ENCODE measurements at regions of chr15 and their contacts with region 1.

Region 1: DNA sequence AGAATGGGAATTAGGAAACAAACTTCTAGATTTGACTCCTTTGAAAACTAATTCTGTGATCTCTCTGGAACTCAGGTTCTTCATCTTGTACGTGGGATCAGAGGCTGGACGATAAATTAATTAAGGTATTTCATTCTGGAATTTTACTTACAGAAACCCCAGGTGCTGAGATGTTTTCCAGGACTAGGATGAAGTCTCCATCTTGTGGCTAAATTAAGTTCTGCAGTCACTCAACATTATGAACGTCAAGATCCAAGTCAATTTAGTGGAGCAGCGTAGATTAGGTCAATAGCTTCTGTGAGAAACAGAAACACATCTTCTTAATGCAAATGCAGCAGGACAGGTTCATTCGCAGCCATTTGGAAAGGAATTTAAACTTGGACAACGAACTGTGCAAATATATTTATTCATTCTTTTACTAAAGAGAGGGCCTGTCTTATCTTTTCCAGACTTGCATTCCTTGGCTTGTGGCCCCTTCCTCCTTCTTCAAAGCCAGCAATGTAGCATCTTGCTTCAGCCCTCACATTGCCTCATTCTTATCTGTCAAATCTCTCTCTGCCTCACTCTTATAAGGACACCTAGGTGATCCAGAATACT is 26.7 kb upstream of the TMC3 start:
- DNase-seq: peak; percentile 52
- H3K4me3 ChIP-seq: peak overlapping the region in 1 of 2 experiments; percentile 2; a peak in 1 of 4 replicates
- H3K27ac ChIP-seq: no peak overlapping the region
- H3K4me1 ChIP-seq: no peaks in the 10 kb centered on the region
- H3K27me3 ChIP-seq: no peaks in the 10 kb centered on the region
- CTCF ChIP-seq: peak; percentile 83
- EP300 ChIP-seq: no peak
- RAD21 ChIP-seq: peak; percentile 91

Region 2: DNA sequence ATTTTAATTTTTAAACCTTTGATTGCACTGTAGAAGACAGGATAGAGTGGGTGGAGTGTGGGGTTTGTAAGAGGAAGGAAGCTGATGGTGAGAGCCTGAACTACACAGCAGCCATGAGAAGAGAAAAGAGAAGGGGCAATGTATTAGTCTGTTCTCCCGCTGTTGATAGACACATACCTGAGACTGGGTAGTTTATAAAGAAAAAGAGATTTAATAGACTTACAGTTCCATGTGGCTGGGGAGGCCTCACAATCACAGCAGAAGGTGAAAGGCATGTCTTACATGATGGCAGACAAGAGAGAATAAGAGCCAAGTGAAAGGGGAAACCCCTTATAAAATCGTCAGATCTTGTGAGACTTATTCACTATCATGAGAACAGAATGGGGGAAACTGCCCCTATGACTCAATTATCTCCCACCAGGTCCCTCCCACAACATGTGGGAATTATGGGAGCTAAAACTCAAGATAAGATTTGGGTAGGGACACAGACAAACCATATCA is 114.1 kb before region 1 on chr15:
- CTCF ChIA-PET with region 1: interaction called, 10 read pairs
- POLR2A ChIA-PET with region 1: no interaction called
- DNase-seq: no peak
- H3K4me3 ChIP-seq: no peak overlapping the region
- H3K27ac ChIP-seq: no peak overlapping the region
- H3K4me1 ChIP-seq: no peaks in the 10 kb centered on the region
- H3K27me3 ChIP-seq: peaks cover 20% of the 10 kb centered on the region
- CTCF ChIP-seq: no peak
- EP300 ChIP-seq: no peak
- RAD21 ChIP-seq: no peak

Region 3: GRCh38 chr15:81293728-81294515 is 106.8 kb before region 1 on chr15:
- CTCF ChIA-PET with region 1: interaction called, 10 read pairs
- POLR2A ChIA-PET with region 1: no interaction called
- DNase-seq: peak; percentile 50
- H3K4me3 ChIP-seq: no peak overlapping the region
- H3K27ac ChIP-seq: no peak overlapping the region
- H3K4me1 ChIP-seq: peaks cover 7 to 9% of the 10 kb centered on the region in 2 experiments; a peak in 2 of 4 replicates
- H3K27me3 ChIP-seq: peaks cover 10% of the 10 kb centered on the region
- CTCF ChIP-seq: no peak
- EP300 ChIP-seq: no peak
- RAD21 ChIP-seq: no peak

Region 4: DNA sequence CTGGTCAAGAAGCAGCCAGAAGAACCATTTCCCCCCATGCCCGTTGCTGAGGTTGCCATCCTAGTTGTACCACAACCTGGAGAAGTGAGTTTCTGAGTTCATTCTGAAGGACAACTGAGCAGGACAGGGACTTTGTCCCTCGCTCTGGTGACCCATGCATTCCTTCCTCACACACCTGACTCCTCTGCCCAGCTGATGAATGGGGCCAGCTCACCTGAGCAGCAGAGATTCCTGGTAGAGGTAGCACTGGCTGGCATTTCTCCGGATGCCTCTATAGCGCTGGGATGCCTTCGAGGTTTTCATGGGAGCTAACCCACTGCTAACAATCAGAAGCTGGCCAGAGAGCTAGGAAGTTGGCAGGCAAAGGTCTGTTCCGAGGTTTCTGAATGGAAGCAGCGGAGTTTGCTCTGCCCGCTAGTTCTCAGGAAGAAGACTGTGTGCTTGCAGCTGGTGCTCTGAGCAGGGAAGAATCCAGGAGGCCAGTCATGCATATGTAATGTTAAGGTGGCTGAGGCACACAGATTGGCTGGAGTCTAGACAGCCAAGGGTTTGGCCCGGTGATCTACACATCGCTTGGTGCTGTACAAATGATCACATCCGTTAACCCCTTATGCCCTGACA is 26.9 kb before region 1 on chr15 and contains the start of gene TMC3:
- CTCF ChIA-PET with region 1: interaction called, 10 read pairs
- POLR2A ChIA-PET with region 1: no interaction called
- DNase-seq: no peak
- H3K4me3 ChIP-seq: no peak within 1 kb of the TSS
- H3K27ac ChIP-seq: no peak within 1 kb of the TSS
- H3K4me1 ChIP-seq: peaks cover 0 to 2% of the 10 kb centered on the region in 2 experiments; a peak in 1 of 4 replicates
- H3K27me3 ChIP-seq: no peaks in the 10 kb centered on the region
- CTCF ChIP-seq: no peak
- EP300 ChIP-seq: no peak
- RAD21 ChIP-seq: no peak
- polyA plus RNA-seq, gene TMC3: not detected in 2 replicates

Region 5: GRCh38 chr15:81381720-81382119 is 19.0 kb before region 1 on chr15:
- CTCF ChIA-PET with region 1: interaction called, 13 read pairs
- POLR2A ChIA-PET with region 1: no interaction called
- DNase-seq: no peak
- H3K4me3 ChIP-seq: no peak overlapping the region
- H3K27ac ChIP-seq: no peak overlapping the region
- H3K4me1 ChIP-seq: no peaks in the 10 kb centered on the region
- H3K27me3 ChIP-seq: no peaks in the 10 kb centered on the region
- CTCF ChIP-seq: no peak
- EP300 ChIP-seq: no peak
- RAD21 ChIP-seq: no peak

Region 6: DNA sequence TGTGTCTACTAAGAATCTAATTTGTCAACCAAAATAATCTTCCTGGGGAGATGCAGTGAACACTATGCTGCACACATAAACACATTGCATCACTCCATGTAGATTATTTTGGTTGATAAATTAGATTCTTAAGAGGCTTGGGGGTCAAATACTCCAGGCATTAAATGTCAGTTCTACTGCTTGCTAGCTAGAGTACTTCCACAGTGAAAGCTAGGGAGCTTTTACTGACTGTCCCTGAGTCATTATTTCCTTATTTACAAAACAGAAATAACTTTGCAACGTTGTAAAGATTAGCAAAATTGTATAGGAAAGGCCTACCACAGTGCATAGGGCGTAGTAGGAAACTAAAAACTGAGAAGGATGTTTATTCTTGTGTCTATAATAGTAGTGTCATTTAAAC is 13.8 kb before region 1 on chr15:
- CTCF ChIA-PET with region 1: interaction called, 13 read pairs
- POLR2A ChIA-PET with region 1: no interaction called
- DNase-seq: no peak
- H3K4me3 ChIP-seq: no peak overlapping the region
- H3K27ac ChIP-seq: no peak overlapping the region
- H3K4me1 ChIP-seq: peaks cover 0 to 7% of the 10 kb centered on the region in 2 experiments; a peak in 2 of 4 replicates
- H3K27me3 ChIP-seq: peaks cover 3% of the 10 kb centered on the region; the same call in 1 of the 2 replicates
- CTCF ChIP-seq: no peak
- EP300 ChIP-seq: no peak
- RAD21 ChIP-seq: no peak